ENCODE measurements at regions of chr1 and their contacts with region 1.

Region 1: GRCh38 chr1:67149179-67149770 is 14.5 kb upstream of the C1orf141 start:
- DNase-seq: peak; percentile 82 to 92 (median 91)
- H3K4me3 ChIP-seq: no peak overlapping the region
- H3K27ac ChIP-seq: no peak overlapping the region
- H3K4me1 ChIP-seq: peaks cover 0 to 7% (median 4%) of the 10 kb centered on the region in 4 experiments
- H3K27me3 ChIP-seq: peaks cover 0 to 10% (median 0%) of the 10 kb centered on the region in 5 experiments

Region 2: DNA sequence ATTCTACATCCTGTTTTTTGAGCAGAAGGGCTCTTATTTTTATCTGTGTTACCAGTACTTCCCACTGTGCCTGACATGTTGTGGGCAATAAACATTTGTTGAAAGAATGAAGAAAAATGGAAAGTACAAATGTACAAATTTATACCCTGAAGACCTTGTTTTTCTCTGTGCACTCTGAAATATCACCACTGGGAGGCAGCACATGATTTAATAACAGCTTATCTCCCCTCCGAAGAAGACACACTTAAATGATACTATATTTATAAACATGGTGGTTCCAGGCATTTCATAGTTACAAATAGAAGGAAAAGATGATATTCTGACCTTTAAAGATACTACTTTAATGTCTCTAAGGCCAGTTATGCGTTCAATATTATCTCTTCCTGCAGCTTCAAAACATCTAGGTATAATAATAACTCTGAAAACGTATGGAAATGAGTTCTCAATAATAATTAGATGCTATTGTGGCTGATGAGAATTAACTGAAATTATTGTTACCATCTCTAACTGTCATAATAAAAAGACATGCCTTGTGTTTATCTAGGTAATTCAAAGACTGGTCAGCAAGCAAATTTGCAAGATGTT is 384.2 kb before region 1 on chr1:
- CTCF ChIA-PET with region 1: interaction called, 30 read pairs
- POLR2A ChIA-PET with region 1: interaction called, 3 read pairs
- DNase-seq: peak; percentile 66 to 86 (median 82)
- H3K4me3 ChIP-seq: no peak overlapping the region
- H3K27ac ChIP-seq: peak overlapping the region in 1 of 2 experiments; percentile 37
- H3K4me1 ChIP-seq: peaks cover 0 to 11% (median 0%) of the 10 kb centered on the region in 4 experiments
- H3K27me3 ChIP-seq: no peaks in the 10 kb centered on the region

Region 3: GRCh38 chr1:66996018-66996682 is 153.1 kb before region 1 on chr1:
- CTCF ChIA-PET with region 1: interaction called, 54 read pairs
- POLR2A ChIA-PET with region 1: no interaction called
- DNase-seq: peak; percentile 87 to 94 (median 93)
- H3K4me3 ChIP-seq: peak overlapping the region in 2 of 7 experiments; percentile 16 to 67
- H3K27ac ChIP-seq: no peak overlapping the region
- H3K4me1 ChIP-seq: peaks cover 7 to 22% (median 12%) of the 10 kb centered on the region in 4 experiments
- H3K27me3 ChIP-seq: no peaks in the 10 kb centered on the region

Region 4: DNA sequence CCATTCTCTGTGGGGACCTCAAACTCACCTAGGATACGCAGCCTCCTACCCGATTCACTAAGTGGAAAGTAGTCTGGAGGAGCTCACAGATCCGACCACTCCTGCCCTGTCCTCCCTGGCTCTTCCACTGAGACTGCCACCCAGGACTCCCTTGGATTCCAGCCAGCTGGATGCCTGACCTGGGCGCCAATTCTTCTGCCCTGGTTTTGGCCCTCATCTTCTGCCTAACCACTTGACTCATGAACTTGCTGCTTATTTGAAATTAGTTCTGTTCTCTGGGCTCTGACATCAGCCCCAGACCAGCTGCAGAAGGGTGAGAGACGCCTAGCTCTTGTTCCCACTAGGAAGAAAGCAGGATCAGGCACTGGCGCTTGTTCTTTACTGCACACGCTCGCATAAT is 144.2 kb before region 1 on chr1:
- CTCF ChIA-PET with region 1: interaction called, 20 read pairs
- POLR2A ChIA-PET with region 1: no interaction called
- DNase-seq: no peak
- H3K4me3 ChIP-seq: no peak overlapping the region
- H3K27ac ChIP-seq: no peak overlapping the region
- H3K4me1 ChIP-seq: peaks cover 2 to 10% (median 7%) of the 10 kb centered on the region in 4 experiments
- H3K27me3 ChIP-seq: no peaks in the 10 kb centered on the region

Region 5: GRCh38 chr1:67134695-67135094 is 14.6 kb before region 1 on chr1 and contains the start of gene C1orf141:
- CTCF ChIA-PET with region 1: interaction called, 17 read pairs
- POLR2A ChIA-PET with region 1: no interaction called
- DNase-seq: peak; percentile 34 to 68 (median 53)
- H3K4me3 ChIP-seq: peak within 1 kb of the TSS in 5 of 7 experiments; percentile 25 to 78 (median 57)
- H3K27ac ChIP-seq: no peak within 1 kb of the TSS
- H3K4me1 ChIP-seq: peaks cover 0 to 11% (median 7%) of the 10 kb centered on the region in 4 experiments
- H3K27me3 ChIP-seq: no peaks in the 10 kb centered on the region

Region 6: GRCh38 chr1:67171978-67172377 is 22.7 kb after region 1 on chr1:
- CTCF ChIA-PET with region 1: interaction called, 16 read pairs
- POLR2A ChIA-PET with region 1: no interaction called
- DNase-seq: peak in 1 of 3 donors; percentile 15
- H3K4me3 ChIP-seq: no peak overlapping the region
- H3K27ac ChIP-seq: no peak overlapping the region
- H3K4me1 ChIP-seq: peaks cover 6 to 16% (median 12%) of the 10 kb centered on the region in 4 experiments
- H3K27me3 ChIP-seq: peaks cover 0 to 63% (median 25%) of the 10 kb centered on the region in 5 experiments

Region 7: DNA sequence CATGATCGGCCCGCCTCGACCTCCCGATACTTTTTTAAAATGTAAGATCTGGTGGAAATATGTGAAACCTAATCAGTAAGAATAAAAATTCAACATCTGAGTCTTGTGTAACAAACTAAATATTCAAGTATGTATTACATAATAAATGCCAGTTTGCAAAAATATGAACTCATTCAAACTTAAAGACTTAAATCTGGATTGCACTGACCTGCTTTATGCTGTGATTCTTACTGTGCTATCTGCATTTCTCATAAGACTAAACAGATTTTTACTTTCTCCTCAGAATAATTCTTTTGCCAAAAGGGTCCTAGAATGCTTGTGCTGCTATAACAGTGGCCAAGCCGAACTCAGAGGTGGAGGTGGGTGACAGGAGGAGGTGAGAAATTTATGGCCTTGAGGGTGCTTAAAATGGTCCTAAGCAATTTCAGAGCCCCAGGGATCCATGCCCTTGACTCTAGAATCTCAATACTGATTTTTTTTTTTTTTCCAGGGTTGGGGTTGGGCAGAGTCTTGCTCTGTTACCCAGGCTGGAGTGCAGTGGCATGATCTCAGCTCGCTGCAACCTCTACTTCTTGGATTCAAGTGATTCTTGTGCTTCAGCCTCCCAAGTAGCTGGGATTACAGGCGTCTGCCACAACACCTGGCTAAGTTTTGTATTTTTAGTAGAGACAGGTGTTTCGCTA is 55.2 kb after region 1 on chr1:
- CTCF ChIA-PET with region 1: interaction called, 10 read pairs
- POLR2A ChIA-PET with region 1: no interaction called
- DNase-seq: no peak
- H3K4me3 ChIP-seq: no peak overlapping the region
- H3K27ac ChIP-seq: no peak overlapping the region
- H3K4me1 ChIP-seq: no peaks in the 10 kb centered on the region
- H3K27me3 ChIP-seq: no peaks in the 10 kb centered on the region

Region 8: DNA sequence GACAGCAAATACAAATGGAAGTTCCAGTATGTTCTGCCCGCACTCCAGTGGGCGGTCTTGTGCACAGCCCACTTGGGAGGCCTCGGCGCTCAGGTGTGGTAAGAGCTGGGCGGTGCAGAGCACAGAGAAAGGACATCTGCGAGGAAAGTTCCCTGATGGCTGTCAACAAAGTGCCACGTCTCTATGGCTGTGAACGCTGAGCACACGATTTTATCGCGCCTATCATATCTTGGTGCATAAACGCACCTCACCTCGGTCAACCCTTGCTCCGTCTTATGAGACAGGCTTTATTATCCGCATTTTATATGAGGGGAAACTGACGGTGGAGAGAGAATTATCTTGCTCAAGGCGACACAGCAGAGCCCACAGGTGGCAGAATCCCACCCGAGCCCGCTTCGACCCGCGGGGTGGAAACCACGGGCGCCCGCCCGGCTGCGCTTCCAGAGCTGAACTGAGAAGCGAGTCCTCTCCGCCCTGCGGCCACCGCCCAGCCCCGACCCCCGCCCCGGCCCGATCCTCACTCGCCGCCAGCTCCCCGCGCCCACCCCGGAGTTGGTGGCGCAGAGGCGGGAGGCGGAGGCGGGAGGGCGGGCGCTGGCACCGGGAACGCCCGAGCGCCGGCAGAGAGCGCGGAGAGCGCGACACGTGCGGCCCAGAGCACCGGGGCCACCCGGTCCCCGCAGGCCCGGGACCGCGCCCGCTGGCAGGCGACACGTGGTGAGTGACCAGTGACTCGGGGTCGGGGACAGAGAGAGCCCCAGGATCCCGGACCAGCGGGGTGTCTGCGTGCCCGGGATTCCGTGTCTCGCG is 158.2 kb after region 1 on chr1 and contains the start of gene IL12RB2:
- CTCF ChIA-PET with region 1: no interaction called
- POLR2A ChIA-PET with region 1: no interaction called
- DNase-seq: peak; percentile 60 to 84 (median 74)
- H3K4me3 ChIP-seq: peak within 1 kb of the TSS; percentile 58 to 91 (median 80)
- H3K27ac ChIP-seq: peak within 1 kb of the TSS; percentile 46 to 74
- H3K4me1 ChIP-seq: peaks cover 3 to 35% (median 11%) of the 10 kb centered on the region in 4 experiments
- H3K27me3 ChIP-seq: no peaks in the 10 kb centered on the region

Region 9: DNA sequence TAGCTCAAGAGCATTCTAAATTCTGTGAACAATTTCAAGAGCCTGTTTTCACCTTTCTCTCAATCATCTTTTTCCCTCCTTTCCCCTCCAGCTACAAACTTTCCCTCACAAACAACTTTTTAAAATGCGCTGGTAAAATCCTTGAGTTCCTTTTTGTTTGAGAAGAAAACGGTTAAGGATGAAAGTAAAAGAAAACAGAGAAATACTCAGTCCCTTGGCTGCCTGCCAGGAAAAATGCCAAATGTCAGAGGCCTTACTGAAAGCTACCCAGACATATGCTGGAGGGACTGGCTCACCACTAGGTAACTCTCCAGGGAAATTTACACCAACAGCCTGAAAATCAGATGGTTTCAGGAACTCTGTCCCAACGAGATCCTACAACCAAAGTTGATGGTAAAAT is 291.9 kb after region 1 on chr1:
- CTCF ChIA-PET with region 1: no interaction called
- POLR2A ChIA-PET with region 1: no interaction called
- DNase-seq: peak; percentile 59 to 81 (median 77)
- H3K4me3 ChIP-seq: peak overlapping the region in 2 of 7 experiments; percentile 21 to 40
- H3K27ac ChIP-seq: peak overlapping the region in 1 of 2 experiments; percentile 45
- H3K4me1 ChIP-seq: peaks cover 7 to 11% (median 9%) of the 10 kb centered on the region in 4 experiments
- H3K27me3 ChIP-seq: no peaks in the 10 kb centered on the region